GM10248 (cell line): ENCODE measurements at regions of chr12 and their contacts with region 1.

Region 1: GRCh38 chr12:57522011-57522886 is at the start of gene MBD6:
- DNase-seq: peak; percentile 98
- CTCF ChIP-seq: no peak

Region 2: DNA sequence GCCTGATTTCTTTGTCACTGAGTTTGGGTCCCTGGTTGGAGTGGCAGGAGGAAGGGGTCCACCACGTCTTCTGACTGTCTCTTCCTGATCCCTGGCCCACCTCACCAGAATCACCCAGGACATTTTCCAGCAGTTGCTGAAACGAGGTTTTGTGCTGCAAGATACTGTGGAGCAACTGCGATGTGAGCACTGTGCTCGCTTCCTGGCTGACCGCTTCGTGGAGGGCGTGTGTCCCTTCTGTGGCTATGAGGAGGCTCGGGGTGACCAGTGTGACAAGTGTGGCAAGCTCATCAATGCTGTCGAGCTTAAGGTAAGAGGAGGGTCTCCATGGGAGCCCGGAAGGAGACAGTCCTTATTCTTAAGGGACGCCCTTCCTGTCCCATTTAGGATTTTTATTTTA is 22.0 kb before region 1 on chr12:
- CTCF ChIA-PET with region 1: interaction called, 3 read pairs
- POLR2A ChIA-PET with region 1: interaction called, 20 read pairs
- DNase-seq: no peak
- CTCF ChIP-seq: no peak

Region 3: DNA sequence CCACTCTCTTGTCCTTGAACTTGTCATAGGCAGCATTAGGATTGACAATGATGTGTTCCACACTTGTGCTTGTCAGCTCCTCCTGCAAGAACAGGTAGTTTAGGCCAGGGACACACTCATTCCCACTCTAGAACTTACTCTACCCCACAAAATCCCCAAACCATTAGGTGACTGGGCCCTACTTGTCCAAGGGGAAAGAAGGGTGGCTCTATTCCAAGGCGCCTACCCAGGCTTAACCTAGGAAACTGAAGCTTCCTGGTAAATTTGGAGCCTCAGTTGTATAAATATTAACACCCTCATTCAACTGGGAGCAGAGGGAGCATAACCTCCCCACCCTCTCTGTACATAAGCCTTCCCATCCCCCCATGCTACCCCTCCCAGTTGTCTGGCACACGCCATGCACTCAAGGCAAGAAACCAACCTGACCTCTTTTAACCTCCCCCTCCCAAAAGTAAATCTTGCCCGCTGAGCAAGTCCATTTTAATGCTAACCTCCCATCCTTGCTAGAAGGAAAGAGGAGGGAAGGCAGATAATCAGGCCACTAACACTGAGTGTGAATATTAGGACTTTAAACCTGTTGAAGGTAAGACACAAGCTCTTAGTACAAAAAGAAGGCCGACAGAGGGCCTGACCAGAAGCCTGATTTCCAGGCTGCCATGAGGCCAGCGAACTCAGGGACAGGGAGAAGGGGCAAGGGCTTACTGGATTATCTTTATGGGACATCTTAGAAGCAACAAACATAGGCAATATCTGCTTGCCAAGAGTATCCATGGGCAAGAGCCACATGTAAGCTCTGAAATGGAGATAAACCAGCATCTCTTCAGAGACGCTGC is 13.7 kb after region 1 on chr12:
- CTCF ChIA-PET with region 1: interaction called, 13 read pairs
- POLR2A ChIA-PET with region 1: interaction called, 5 read pairs
- DNase-seq: no peak
- CTCF ChIP-seq: no peak

Region 4: DNA sequence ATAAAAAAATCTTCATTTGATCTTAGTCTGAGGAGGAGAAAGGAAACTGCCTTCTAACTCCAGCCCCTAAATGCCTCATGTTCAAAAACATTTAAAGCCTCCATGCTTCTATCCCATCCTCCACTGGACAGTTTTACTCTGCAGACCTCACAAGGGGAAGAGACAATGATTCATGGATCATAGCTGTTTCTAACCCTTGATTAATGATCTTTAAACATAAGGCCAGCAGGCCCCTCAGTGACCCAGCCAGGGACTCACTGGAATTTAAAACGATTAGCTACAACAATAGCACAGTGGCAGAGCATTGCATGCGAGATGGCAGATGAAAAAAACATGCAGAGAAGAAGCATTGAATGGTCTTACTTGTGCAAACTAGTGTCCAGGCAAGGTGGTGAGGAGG is 18.8 kb after region 1 on chr12:
- CTCF ChIA-PET with region 1: interaction called, 13 read pairs
- POLR2A ChIA-PET with region 1: interaction called, 5 read pairs
- DNase-seq: no peak
- CTCF ChIP-seq: no peak

Region 5: DNA sequence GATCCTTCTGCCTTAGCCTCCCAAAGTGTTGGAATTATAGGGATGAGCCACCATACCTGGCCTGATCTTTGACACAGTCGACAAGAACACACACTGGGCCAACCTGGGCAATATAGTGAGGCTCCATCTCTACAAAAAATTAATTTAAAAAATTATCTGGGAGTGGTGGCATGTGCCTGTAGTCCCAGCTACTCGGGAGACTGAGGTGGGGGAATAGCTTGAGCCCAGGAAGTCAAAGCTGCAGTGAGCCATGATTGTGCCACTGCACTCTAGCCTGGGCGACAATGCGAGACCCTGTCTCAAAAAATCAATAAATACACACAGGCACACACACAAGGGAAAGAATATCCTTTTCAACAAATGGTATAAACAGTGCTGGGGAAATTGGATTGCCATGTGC is 165.6 kb after region 1 on chr12:
- CTCF ChIA-PET with region 1: no interaction called
- POLR2A ChIA-PET with region 1: no interaction called
- DNase-seq: no peak
- CTCF ChIP-seq: no peak

Region 6: GRCh38 chr12:57771708-57772428 is 249.6 kb after region 1 on chr12 and contains the start of gene METTL1:
- CTCF ChIA-PET with region 1: no interaction called
- POLR2A ChIA-PET with region 1: no interaction called
- DNase-seq: peak; percentile 96
- CTCF ChIP-seq: no peak